ENCODE measurements at regions of chr1 and their contacts with region 1.

Region 1: DNA sequence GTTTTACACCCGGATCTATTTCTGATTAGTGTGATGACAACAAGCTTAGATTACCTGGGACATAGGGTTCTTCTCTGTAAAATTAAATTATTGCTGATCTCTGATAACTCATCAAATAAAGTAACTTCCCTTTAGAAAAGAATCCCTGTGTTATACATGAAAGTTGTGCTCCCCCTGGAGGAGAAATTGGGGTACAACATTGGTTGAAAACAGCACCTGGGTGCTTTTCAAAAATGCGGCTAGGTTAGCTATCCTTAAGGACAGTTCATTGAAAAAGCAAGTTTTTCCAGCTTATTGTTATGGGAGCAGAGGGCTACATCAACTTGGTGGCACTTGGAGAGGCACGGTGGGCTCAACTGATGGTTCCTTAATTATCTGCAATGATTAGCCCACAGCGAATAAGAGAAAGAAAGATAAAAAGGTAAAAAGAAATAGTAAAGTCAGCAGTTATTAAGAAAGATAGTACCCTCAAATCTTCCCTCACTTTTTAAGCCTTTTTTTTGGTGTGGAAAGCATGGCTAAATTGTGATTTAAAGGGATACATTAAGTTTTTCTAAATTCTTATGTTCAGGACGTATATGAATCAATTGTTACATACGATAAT is 97.8 kb downstream of the FMN2 start:
- DNase-seq: no peak
- H3K4me3 ChIP-seq: no peak overlapping the region
- CTCF ChIP-seq: peak; percentile 63

Region 2: DNA sequence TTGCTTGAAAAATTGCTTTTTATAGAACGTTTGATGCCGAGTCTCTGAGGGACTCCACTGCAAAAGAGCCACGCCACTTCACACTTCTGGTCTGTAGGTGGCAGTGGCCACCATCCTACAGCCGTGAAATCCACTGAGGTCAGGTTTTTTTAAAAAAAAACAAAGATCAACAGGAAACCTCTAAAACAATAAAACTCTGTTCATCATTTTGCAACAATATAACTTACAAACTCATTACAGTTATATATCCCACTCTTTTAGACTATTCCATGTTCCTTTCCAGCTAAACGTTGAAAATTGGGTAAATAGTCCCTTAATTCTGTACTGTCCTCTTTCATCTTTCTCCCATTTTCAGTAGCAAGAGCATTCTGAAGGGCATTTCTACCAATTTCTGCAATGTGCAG is 162.4 kb before region 1 on chr1:
- CTCF ChIA-PET with region 1: interaction called, 85 read pairs
- POLR2A ChIA-PET with region 1: no interaction called
- DNase-seq: no peak
- H3K4me3 ChIP-seq: no peak overlapping the region
- CTCF ChIP-seq: peak; percentile 80

Region 3: DNA sequence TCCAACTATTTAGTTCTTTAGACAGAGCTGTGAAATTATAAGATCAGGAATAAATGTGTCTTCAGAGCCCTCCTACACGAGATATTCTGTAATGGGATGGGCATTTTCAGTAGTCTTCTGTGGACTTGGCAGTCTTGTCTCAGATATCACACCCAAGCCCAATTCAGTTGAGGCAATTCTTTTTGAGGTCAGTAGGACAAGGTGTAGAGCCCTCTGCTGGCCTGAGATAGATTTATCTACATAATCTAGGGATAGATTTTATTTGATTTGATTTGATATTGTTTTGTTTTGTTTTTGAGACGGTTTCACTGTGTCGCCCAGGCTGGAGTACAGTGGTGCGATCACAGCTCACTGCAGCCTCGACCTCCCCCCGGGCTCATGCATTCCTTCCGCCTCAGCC is 20.3 kb before region 1 on chr1:
- CTCF ChIA-PET with region 1: interaction called, 21 read pairs
- POLR2A ChIA-PET with region 1: no interaction called
- DNase-seq: no peak
- H3K4me3 ChIP-seq: no peak overlapping the region
- CTCF ChIP-seq: no peak

Region 4: GRCh38 chr1:240178366-240178765 is 11.1 kb before region 1 on chr1:
- CTCF ChIA-PET with region 1: interaction called, 21 read pairs
- POLR2A ChIA-PET with region 1: no interaction called
- DNase-seq: no peak
- H3K4me3 ChIP-seq: no peak overlapping the region
- CTCF ChIP-seq: no peak

Region 5: DNA sequence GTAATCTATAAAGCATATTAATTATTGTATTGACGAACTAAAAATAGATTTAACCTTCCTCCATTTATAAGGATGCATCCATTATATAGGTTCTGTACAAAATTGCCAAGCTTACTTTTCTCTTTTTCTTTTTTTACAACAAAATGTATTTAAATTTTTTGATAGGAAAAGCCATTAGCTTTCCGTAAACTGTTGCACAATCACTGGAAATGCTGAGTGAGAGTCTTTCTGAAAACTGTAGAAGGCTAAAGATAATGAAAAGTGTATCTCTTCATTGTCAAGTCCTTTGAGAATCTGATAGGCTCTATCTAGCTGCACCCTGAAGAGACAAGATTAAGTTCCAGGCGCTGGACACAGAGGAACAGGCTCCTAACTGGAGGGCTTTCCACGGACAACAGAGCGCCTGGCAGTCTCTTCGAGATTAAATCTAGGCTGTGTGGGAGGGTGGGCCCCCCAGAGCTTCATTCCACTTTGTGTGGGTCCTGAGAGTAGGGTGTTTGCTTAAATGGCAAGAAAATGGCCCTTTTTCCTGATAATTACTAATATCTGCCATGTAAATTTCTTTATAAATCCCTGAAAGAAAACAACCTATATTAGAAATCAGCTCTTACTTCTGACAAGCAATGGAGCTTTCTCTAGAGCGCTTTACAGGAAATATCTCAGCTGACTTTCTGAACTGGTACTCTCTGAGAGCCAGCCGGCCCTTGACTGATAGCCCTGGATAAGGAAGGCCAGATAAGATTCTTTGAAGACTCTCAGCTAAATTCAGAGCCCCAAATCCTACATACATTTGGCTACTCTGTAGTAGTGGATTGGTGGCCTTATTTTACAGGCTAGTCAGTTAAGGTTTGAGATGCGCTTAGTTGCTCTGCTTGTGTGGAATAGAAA is 10.5 kb after region 1 on chr1:
- CTCF ChIA-PET with region 1: interaction called, 22 read pairs
- POLR2A ChIA-PET with region 1: no interaction called
- DNase-seq: no peak
- H3K4me3 ChIP-seq: no peak overlapping the region
- CTCF ChIP-seq: no peak

Region 6: GRCh38 chr1:240611619-240612480 is 422.4 kb after region 1 on chr1 and contains the start of gene GREM2:
- CTCF ChIA-PET with region 1: interaction called, 14 read pairs
- POLR2A ChIA-PET with region 1: no interaction called
- DNase-seq: peak; percentile 69
- H3K4me3 ChIP-seq: peak within 1 kb of the TSS; percentile 69
- CTCF ChIP-seq: no peak

Region 7: DNA sequence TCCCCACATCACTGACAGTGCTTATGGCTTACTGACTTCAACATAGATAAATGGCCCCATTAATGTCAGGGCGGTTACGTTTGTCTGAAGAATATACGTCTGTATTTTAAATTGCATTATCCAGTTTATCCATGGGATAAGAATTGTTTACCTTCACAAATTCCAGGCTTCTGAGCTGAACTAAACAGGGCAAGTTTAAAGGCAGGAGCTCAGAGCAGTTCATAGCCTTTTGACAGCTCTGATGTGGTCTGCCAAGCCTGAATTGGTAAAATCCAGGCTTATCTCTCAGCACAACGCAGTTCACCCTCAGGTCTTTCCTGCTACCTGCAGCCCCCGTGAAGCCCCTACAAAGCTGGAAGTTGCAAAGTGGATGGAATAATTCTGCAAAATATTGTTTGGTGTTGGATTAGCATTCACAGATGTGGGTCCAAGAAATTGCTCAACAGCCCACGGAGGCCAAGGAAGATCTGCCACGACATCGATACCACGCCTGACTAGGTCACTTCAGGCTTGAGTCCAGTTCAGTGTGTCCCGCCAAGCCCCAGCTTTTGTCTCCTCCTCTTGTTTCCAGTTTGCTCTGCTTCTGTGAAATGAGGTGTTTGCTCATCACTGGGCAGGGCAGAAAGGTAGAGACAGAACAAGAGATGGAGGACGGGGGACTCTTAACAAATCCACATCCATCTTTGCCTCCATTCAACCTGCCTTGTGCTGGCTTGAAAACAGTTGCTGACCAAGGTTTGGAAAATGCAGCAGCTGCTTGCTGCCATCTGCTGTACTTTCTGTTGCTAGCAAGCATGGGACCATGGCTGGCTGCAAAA is 502.2 kb after region 1 on chr1:
- CTCF ChIA-PET with region 1: interaction called, 52 read pairs
- POLR2A ChIA-PET with region 1: no interaction called
- DNase-seq: no peak
- H3K4me3 ChIP-seq: no peak overlapping the region
- CTCF ChIP-seq: peak; percentile 85